Pancreas (tissue), 10 donors: ENCODE measurements at regions of chr11 and their contacts with region 1.

Region 1: DNA sequence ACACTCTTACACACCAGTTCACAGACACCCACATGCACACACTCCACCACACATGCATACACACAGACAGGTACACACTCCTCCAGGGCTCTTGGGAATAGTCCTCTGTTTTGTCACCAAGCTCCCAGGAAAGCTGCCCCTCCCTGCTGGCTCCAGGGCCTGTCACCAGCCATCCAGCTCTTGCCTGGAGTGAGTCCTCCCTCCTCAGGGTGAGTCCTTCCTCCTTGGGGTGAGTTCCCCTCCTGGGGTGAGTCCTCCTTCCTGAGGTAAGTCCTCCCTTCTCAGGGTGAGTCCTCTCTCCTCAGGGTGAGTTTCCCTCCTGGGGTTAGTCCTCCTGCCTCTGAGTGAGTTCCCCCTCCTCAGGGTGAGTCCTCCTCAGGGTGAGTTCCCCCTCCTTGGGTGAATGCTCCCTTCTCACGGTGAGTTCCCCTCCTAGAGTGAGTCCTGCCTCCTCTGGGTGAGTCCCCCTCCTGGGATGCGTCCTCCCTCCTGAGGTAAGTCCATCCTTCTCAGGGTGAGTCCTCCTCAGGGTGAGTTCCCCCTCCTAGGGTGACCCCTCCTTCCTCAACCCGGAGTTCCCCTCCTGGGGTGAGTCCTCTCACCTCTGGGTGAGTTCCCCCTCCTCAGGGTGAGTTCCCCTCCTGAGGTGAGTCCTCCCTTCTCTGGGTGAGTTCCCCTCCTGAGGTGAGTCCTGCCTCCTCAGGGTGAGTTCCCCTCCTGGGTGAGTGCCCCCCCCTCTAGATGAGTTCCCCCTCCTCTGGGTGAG is 100.6 kb upstream of the FGF3 start:
- DNase-seq: peak in 2 of 6 donors; percentile 9 to 19
- ATAC-seq: no peak
- H3K4me3 ChIP-seq: no peak overlapping the region
- H3K27ac ChIP-seq: no peak overlapping the region
- H3K4me1 ChIP-seq: no peaks in the 10 kb centered on the region
- H3K27me3 ChIP-seq: no peaks in the 10 kb centered on the region
- CTCF ChIP-seq: no peak

Region 2: GRCh38 chr11:70186420-70186819 is 266.6 kb after region 1 on chr11:
- intact Hi-C with region 1: loop called in 2 of 3 experiments (anchors 5 kb)
- DNase-seq: no peak
- ATAC-seq: no peak
- H3K4me3 ChIP-seq: no peak overlapping the region
- H3K27ac ChIP-seq: no peak overlapping the region
- H3K4me1 ChIP-seq: no peaks in the 10 kb centered on the region
- H3K27me3 ChIP-seq: no peaks in the 10 kb centered on the region
- CTCF ChIP-seq: no peak

Region 3: DNA sequence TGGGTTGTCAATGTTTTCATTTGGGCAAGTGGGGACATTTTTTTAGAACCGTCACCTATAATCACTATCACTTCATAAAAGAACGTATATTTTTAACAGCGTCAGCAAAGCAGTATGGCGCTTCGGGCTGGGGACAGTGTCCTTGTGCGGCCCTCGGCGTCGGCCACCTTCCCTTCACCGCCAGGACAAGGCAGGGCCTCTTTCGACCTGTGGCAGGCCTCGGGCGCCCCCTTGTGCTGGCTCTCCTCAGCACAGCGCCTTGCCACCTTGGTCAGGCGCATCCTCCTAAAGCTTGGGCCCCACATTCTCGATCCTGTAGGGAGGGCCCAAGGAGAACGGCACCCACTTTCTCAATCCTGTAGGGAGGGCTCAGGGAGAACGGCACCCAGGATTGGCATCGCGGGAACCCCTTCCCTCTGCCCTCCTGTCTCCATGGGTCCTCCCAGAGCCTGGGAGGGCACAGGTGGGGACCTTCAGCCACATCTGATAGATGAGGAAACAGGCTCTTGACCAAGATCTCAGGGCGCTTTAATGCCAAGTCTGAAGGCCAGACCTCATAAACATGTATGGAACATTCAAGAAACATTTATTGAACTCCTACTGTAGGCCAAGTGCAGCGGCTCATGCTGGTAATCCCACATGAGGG is 271.8 kb after region 1 on chr11:
- intact Hi-C with region 1: loop called in 2 of 3 experiments (anchors 5 kb)
- DNase-seq: peak; percentile 36 to 90 (median 76)
- ATAC-seq: peak; percentile 74 to 90 (median 89)
- H3K4me3 ChIP-seq: no peak overlapping the region
- H3K27ac ChIP-seq: no peak overlapping the region
- H3K4me1 ChIP-seq: no peaks in the 10 kb centered on the region
- H3K27me3 ChIP-seq: no peaks in the 10 kb centered on the region
- CTCF ChIP-seq: peak; percentile 49 to 85 (median 74)